ENCODE measurements at regions of chr1 and their contacts with region 1.

Region 1: DNA sequence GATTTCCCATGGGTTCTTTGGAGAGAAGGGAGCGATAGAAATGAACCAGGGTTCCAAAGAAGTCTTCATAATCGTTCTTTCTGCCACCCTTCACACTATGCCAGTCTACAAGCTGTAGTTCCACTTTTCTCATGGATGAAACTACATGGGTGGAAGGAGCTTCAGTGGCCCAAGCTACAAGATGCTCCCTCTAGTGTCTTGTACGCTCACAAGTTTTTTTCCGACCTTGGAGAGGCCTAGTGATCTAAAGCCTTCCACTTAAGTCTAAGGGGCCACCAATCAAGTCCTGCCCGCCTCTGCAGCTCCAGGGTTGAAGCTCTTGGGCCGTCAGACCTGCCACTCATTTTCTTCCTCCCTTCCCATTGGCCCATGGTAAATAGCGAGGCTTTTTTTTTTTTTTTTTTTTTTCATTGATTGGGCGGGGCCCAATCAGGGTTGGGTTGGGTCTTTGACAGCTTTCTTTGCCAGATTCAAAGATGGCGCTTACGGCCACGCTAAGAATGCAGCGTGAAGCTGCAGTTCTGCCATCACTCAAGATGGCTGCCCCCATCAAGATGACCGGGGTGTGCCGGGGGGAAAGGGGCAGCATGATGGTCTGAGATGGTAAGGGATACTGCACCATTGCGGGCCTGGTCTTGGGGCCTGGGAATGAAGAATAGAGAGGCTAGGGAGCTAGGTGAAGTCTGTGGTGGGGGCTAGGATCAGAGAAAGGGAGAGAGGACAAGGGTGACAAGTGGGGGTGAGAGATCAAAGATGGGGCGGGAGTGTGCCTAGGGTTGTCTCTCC is at the start of gene TOMM40L:
- H3K4me3 Mint-ChIP-seq: peak within 1 kb of the TSS; percentile 100
- H3K27ac Mint-ChIP-seq: peak within 1 kb of the TSS; percentile 94
- H3K4me1 Mint-ChIP-seq: peaks cover 62% of the 10 kb centered on the region
- H3K27me3 Mint-ChIP-seq: no peaks in the 10 kb centered on the region

Region 2: DNA sequence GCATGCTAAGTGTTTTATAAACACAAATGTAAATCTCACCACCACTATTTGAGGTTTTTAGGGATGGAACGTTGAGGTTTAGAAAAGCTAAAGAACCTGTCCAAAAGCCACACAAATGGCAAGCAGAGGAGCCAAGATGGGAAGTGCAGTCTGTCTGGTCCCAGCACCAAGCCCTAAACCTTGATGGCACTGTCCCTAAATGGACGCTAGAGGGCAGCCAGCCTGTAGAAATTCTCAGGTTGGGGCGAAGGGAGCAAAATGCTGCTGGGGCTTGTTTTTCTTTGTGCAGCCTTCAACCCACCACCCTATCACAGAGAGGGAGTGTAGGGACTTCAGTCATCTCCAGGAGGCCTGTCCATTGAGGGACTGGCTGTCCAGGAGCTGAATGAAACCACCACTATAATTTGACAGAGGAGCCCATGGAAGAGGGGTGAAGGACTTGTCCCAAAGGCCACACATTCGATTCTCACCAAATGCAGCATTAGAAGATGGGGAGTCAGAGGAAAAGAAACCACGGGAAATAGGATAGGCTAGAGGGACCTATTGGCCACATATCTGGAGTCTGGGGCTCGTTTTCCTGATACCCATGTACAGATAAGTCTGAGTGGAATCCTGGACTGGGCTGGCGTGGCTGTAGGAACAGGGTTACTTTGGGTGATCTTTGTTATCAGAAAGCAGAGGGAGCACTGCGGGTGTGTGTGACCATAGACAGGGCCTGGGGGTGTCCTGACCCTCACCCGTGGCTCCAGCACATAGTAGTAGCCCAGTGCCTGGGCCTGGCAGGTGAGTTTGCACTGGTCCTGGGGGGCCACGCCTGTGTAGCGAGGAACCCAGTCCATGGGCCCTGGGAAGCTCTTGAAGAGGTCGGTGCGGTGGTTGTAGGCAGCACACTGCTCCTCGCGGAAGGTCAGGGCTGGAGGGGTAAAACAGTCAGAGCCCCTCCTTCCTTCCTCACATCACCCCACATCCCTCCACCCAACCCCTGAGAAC is 33.0 kb before region 1 on chr1:
- intact Hi-C with region 1: loop called (anchors 1 kb)
- H3K4me3 Mint-ChIP-seq: no peak overlapping the region
- H3K27ac Mint-ChIP-seq: peak overlapping the region; percentile 77
- H3K4me1 Mint-ChIP-seq: peaks cover 70% of the 10 kb centered on the region
- H3K27me3 Mint-ChIP-seq: peaks cover 2% of the 10 kb centered on the region

Region 3: GRCh38 chr1:161209790-161210409 is 15.8 kb before region 1 on chr1:
- intact Hi-C with region 1: loop called (anchors 2 kb)
- H3K4me3 Mint-ChIP-seq: no peak overlapping the region
- H3K27ac Mint-ChIP-seq: peak overlapping the region; percentile 52
- H3K4me1 Mint-ChIP-seq: peaks cover 46% of the 10 kb centered on the region
- H3K27me3 Mint-ChIP-seq: no peaks in the 10 kb centered on the region

Region 4: DNA sequence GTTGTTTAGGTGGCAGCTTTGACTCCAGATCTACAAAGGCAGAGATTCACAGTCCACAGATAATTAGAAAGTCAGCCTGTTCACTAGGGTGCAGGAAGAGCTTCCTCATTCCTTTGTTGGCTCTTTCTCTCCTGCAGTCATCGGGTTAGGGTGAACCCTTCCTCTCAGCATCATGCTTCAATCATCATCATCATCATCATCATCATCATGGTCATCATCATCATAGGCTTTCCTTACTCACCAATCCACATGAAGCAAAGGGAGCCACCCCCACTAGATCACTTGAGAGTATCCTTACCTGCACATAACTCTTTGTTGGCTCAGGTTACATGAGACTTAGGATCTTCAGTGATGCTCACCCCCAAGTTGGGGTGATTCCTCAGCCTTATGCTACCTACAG is 65.1 kb after region 1 on chr1:
- intact Hi-C with region 1: loop called (anchors 2 kb)
- H3K4me3 Mint-ChIP-seq: no peak overlapping the region
- H3K27ac Mint-ChIP-seq: no peak overlapping the region
- H3K4me1 Mint-ChIP-seq: peaks cover 14% of the 10 kb centered on the region
- H3K27me3 Mint-ChIP-seq: no peaks in the 10 kb centered on the region

Region 5: GRCh38 chr1:161314201-161314981 is 88.7 kb after region 1 on chr1 and contains the start of gene SDHC:
- intact Hi-C with region 1: loop called (anchors 5 kb)
- H3K4me3 Mint-ChIP-seq: peak within 1 kb of the TSS; percentile 91
- H3K27ac Mint-ChIP-seq: peak within 1 kb of the TSS; percentile 99
- H3K4me1 Mint-ChIP-seq: peaks cover 31% of the 10 kb centered on the region
- H3K27me3 Mint-ChIP-seq: no peaks in the 10 kb centered on the region

Region 6: DNA sequence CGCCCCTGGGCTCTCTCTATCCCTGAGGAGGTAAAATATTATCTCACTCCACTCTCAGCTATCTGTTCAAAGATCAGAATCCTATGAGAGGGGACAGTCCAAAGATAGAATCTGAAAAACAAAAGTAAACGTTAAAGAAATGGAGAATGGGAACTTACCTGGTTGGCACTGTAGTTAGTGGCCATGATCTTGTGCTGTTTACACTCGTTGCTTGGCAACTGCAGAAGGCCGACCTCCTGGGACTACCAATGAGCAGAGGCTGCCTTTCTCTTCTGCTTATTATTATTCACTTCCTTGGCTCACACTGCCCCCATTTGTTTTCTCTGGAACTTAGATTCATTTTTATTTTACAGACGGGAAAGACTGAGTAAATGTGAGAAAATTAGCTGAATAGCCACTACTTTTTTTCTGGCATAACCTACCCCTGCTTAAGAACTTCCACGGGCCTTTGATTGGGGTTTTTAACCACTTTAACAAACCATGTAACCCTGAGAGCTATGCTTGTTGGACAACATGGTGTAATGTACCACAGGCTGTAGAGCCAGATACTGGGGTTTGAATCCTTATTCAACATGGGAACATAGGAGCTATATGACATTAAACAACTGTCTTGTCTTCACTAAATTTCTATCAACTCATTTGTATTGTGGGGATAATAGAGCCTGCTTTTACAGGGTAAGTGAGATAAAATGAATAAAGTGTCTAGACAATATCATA is 142.1 kb after region 1 on chr1 and contains the start of gene CFAP126:
- intact Hi-C with region 1: loop called (anchors 5 kb)
- H3K4me3 Mint-ChIP-seq: no peak within 1 kb of the TSS
- H3K27ac Mint-ChIP-seq: peak within 1 kb of the TSS; percentile 31
- H3K4me1 Mint-ChIP-seq: peaks cover 5% of the 10 kb centered on the region
- H3K27me3 Mint-ChIP-seq: no peaks in the 10 kb centered on the region

Region 7: DNA sequence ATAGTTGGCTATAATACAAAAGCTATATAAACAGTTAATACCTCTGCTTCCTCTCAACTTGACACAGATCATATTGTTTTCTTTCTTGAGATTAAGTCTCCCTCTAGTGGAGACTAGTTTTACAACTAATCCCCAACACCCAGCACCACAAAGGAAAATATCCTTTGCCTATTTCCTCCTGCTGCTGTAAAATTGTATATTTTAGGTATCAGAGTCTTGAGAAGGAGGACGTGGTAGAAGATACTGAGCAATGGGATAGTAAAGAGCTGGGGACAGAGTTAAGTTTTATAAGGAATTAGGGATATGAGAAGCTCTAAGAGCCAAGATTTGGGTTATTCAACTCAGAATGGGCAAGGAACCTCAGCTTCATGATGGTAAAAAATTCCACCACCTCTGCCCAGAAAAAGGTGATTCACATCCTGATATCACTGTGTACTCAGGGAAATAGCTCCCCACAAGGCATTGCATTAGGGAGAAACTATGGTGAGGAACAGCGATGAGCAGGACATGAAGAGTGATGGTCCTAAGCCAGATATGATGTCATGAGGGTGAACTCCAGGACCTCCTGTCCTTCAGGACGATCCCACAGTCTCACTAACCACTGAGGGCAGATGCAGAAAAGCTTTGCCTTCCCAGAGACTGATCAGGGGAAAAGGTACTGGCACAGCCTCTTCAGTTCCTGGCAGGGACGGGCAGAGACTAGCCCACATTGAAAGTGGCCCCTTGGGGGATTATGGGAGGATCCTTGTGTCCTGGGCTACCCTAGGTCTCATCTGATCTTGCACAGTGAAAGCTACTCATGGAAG is 156.7 kb after region 1 on chr1:
- intact Hi-C with region 1: loop called (anchors 1 kb)
- H3K4me3 Mint-ChIP-seq: no peak overlapping the region
- H3K27ac Mint-ChIP-seq: peak overlapping the region; percentile 52
- H3K4me1 Mint-ChIP-seq: peaks cover 14% of the 10 kb centered on the region
- H3K27me3 Mint-ChIP-seq: peaks cover 2% of the 10 kb centered on the region